Activated CD8-positive, alpha-beta T cell treated with anti-CD3 and anti-CD28 coated beads, Interleukin-2, amount 10 ng/mL, durations not matched to agents 7 days and 5 days (primary cell): ENCODE measurements at regions of chr17 and their contacts with region 1.

Region 1: GRCh38 chr17:42517516-42517915 is 18.5 kb upstream of the NAGLU start:
- DNase-seq: peak; percentile 87
- ATAC-seq: peak; percentile 86
- H3K4me3 Mint-ChIP-seq: no peak overlapping the region
- H3K27ac Mint-ChIP-seq: no peak overlapping the region
- H3K4me1 Mint-ChIP-seq: peaks cover 5% of the 10 kb centered on the region
- H3K27me3 Mint-ChIP-seq: peaks cover 8% of the 10 kb centered on the region

Region 2: GRCh38 chr17:42260318-42260717 is 257.2 kb before region 1 on chr17:
- CTCF ChIA-PET with region 1: no interaction called
- POLR2A ChIA-PET with region 1: no interaction called
- DNase-seq: no peak
- ATAC-seq: no peak
- H3K4me3 Mint-ChIP-seq: no peak overlapping the region
- H3K27ac Mint-ChIP-seq: no peak overlapping the region
- H3K4me1 Mint-ChIP-seq: peaks cover 3% of the 10 kb centered on the region
- H3K27me3 Mint-ChIP-seq: no peaks in the 10 kb centered on the region

Region 3: GRCh38 chr17:42422958-42423712 is 94.4 kb before region 1 on chr17 and contains the start of gene CAVIN1:
- CTCF ChIA-PET with region 1: interaction called, 16 read pairs
- POLR2A ChIA-PET with region 1: interaction called, 3 read pairs
- DNase-seq: peak; percentile 33
- ATAC-seq: peak; percentile 53
- H3K4me3 Mint-ChIP-seq: peak within 1 kb of the TSS; percentile 68
- H3K27ac Mint-ChIP-seq: no peak within 1 kb of the TSS
- H3K4me1 Mint-ChIP-seq: peaks cover 14% of the 10 kb centered on the region
- H3K27me3 Mint-ChIP-seq: peaks cover 47% of the 10 kb centered on the region
- total RNA-seq, gene CAVIN1: 1.7 to 2.0 TPM

Region 4: DNA sequence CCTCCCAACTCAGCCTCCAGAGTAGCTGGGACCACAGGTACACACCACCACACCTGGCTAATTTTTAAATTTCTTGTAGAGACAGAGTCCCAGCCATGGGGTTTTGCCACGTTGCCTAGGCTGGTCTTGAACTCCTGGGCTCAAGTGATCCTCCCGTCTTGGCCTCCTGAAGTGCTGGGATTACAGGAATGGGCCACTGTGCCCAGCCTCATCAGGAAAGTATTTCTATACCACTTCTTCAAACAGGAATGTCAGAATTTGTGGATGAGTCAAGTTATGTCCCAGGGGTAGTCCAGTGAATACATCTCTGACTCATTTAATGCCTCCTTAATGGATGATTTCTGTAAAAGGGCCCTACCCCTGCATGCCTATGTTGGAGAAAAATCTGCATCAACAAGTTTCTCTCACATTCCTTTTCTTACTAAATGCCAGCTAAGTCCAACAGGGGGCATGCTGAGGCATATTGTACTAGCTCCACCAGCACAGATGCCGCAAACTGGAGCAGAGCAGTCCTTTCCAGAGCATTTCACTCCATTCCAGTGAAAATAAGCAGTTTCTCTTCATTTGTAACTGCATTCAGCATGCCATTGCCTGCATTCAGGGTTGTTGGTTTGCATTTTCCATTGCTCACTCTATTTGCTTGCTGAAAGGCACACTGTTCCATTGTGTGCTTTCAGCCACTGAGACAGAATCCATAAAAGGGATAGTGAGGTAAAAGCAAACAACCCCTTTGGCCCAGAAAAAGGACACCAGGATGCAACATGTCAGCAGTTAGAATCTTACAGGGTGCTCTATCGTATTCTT is 89.2 kb before region 1 on chr17:
- CTCF ChIA-PET with region 1: interaction called, 16 read pairs
- POLR2A ChIA-PET with region 1: interaction called, 3 read pairs
- DNase-seq: peak; percentile 58
- ATAC-seq: peak; percentile 64
- H3K4me3 Mint-ChIP-seq: no peak overlapping the region
- H3K27ac Mint-ChIP-seq: no peak overlapping the region
- H3K4me1 Mint-ChIP-seq: peaks cover under 1% of the 10 kb centered on the region
- H3K27me3 Mint-ChIP-seq: peaks cover 31% of the 10 kb centered on the region

Region 5: GRCh38 chr17:42441371-42442195 is 75.9 kb before region 1 on chr17:
- CTCF ChIA-PET with region 1: interaction called, 11 read pairs
- POLR2A ChIA-PET with region 1: no interaction called
- DNase-seq: no peak
- ATAC-seq: no peak
- H3K4me3 Mint-ChIP-seq: no peak overlapping the region
- H3K27ac Mint-ChIP-seq: no peak overlapping the region
- H3K4me1 Mint-ChIP-seq: peaks cover 2% of the 10 kb centered on the region
- H3K27me3 Mint-ChIP-seq: peaks cover 9% of the 10 kb centered on the region

Region 6: DNA sequence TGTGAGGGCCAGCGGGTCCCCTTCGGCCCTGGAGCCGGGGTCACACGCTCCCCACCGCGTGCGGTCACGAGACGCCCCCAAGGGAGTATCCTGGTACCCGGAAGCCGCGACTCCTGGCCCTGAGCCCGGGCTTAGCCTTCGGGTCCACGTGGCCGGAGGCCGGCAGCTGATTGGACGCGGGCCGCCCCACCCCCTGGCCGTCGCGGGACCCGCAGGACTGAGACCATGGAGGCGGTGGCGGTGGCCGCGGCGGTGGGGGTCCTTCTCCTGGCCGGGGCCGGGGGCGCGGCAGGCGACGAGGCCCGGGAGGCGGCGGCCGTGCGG is 18.5 kb after region 1 on chr17 and contains the start of gene NAGLU:
- CTCF ChIA-PET with region 1: interaction called, 31 read pairs
- POLR2A ChIA-PET with region 1: no interaction called
- DNase-seq: peak; percentile 88
- ATAC-seq: peak; percentile 91
- H3K4me3 Mint-ChIP-seq: peak within 1 kb of the TSS; percentile 87
- H3K27ac Mint-ChIP-seq: peak within 1 kb of the TSS; percentile 87
- H3K4me1 Mint-ChIP-seq: peaks cover 59% of the 10 kb centered on the region
- H3K27me3 Mint-ChIP-seq: peaks cover 7% of the 10 kb centered on the region
- total RNA-seq, gene NAGLU: 19.3 to 20.5 TPM

Region 7: DNA sequence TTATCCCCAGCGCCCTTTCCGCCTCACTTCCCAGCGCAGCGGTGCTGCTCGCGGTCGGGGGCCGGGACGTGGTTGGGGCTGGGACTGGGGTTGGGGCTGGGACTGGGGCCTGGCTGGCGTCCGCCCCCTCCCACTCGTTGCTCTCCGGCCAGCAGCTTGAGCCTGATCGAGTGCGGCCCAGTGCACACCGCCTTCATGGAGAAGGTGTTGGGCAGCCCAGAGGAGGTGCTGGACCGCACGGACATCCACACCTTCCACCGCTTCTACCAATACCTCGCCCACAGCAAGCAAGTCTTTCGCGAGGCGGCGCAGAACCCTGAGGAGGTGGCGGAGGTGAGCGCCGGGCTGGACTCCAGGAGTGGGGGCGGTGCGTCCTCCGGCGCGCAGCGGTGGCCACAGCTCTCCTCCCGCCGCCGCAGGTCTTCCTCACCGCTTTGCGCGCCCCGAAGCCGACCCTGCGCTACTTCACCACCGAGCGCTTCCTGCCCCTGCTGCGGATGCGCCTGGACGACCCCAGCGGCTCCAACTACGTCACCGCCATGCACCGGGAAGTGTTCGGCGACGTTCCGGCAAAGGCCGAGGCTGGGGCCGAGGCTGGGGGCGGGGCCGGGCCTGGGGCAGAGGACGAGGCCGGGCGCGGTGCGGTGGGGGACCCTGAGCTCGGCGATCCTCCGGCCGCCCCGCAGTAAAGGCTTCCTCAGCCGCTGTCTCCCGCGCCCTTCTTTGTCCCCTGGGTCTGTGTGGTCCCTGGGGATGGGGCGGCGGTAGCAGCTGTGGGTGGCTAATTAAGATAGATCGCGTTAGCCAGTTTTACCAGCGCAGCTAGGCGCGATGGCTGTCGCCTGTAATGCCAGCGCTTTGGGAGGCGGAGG is 37.0 kb after region 1 on chr17:
- CTCF ChIA-PET with region 1: no interaction called
- POLR2A ChIA-PET with region 1: no interaction called
- DNase-seq: peak; percentile 89
- ATAC-seq: peak; percentile 92
- H3K4me3 Mint-ChIP-seq: peak overlapping the region; percentile 87
- H3K27ac Mint-ChIP-seq: peak overlapping the region; percentile 93
- H3K4me1 Mint-ChIP-seq: peaks cover 29% of the 10 kb centered on the region
- H3K27me3 Mint-ChIP-seq: no peaks in the 10 kb centered on the region